Activated CD4-positive, alpha-beta memory T cell treated with anti-CD3 and anti-CD28 coated beads, Interleukin-2, amount 10 ng/mL, durations not matched to agents 7 days and 5 days (primary cell): ENCODE measurements at regions of chr9 and their contacts with region 1.

Region 1: GRCh38 chr9:2638871-2639673 is 17.5 kb downstream of the VLDLR start:
- DNase-seq: no peak
- H3K4me3 Mint-ChIP-seq: no peak overlapping the region
- H3K27ac Mint-ChIP-seq: no peak overlapping the region
- H3K4me1 Mint-ChIP-seq: peaks cover 20% of the 10 kb centered on the region
- H3K27me3 Mint-ChIP-seq: peaks cover under 1% of the 10 kb centered on the region

Region 2: GRCh38 chr9:2655411-2655901 is 16.4 kb after region 1 on chr9:
- CTCF ChIA-PET with region 1: no interaction called
- POLR2A ChIA-PET with region 1: interaction called, 13 read pairs
- DNase-seq: peak; percentile 64
- H3K4me3 Mint-ChIP-seq: peak overlapping the region; percentile 0
- H3K27ac Mint-ChIP-seq: peak overlapping the region; percentile 93
- H3K4me1 Mint-ChIP-seq: peaks cover 32% of the 10 kb centered on the region
- H3K27me3 Mint-ChIP-seq: no peaks in the 10 kb centered on the region